ENCODE measurements at regions of chr6 and their contacts with region 1.

Region 1: DNA sequence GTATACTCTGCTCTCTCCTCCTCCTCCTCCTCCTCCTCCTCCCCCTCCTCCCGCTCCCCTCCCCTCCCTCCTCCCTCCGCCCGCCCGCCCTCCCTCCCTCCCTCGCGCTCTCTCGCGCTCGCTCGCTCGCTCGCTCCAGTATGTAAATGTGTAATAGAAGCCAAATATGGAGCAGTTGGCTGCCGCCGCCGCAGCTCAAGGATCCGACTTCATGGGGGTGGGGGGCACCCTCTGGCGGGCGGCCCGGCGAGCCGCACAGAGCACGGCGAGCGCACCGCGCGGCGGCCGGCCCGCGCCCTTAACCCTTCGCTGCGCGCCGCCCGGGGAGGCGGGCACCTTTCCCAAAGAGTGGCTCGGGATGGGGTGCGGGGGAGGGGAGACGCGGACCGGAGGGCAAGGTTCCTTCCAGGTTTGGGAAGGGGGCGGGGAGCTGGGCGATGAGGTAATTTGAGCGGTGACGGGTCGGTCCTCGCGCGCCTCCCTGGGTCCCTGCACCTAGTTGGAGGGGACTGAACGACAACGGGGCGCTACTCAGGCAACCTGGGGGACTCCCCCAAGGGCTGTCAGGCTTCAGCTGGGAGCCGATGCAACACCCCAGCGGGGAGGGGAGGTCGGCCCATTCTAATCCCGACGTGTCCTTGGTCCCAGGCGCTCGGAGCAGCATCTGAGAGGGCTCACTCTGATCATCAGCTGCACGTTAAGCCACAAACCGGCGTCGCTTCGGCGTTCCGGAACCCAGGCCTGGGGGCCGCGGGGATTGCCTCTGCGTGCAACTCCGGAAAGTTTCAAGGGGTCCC is 409 bp upstream of the ATXN1 start:
- DNase-seq: peak; percentile 91
- H3K4me3 Mint-ChIP-seq: peak overlapping the region; percentile 99
- H3K27ac Mint-ChIP-seq: peak overlapping the region; percentile 99
- H3K4me1 Mint-ChIP-seq: peaks cover 63% of the 10 kb centered on the region
- H3K27me3 Mint-ChIP-seq: no peaks in the 10 kb centered on the region

Region 2: GRCh38 chr6:16332175-16332542 is 429.5 kb before region 1 on chr6:
- CTCF ChIA-PET with region 1: interaction called, 40 read pairs
- DNase-seq: peak; percentile 83
- H3K4me3 Mint-ChIP-seq: no peak overlapping the region
- H3K27ac Mint-ChIP-seq: no peak overlapping the region
- H3K4me1 Mint-ChIP-seq: no peaks in the 10 kb centered on the region
- H3K27me3 Mint-ChIP-seq: no peaks in the 10 kb centered on the region

Region 3: DNA sequence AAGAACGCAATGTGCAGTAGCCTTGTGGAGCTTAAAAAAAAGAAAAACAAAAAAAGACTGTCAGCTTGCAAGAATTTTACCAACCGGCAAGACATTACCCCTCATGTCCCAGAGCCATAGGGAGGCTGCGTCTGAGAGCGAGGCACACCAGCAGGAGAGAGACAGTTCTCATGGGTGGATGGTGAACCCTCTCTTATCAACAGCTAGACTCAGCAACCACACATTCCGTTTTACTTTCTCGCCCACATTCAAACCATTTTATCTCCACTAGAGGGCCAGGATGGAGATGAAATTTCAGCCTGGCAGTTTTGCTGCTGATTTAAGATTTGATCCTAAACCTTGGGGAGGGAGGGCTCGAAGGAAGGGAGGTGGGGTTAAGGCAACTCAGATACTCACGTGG is 247.4 kb before region 1 on chr6:
- CTCF ChIA-PET with region 1: interaction called, 121 read pairs
- DNase-seq: peak; percentile 45
- H3K4me3 Mint-ChIP-seq: no peak overlapping the region
- H3K27ac Mint-ChIP-seq: peak overlapping the region; percentile 54
- H3K4me1 Mint-ChIP-seq: peaks cover 69% of the 10 kb centered on the region
- H3K27me3 Mint-ChIP-seq: no peaks in the 10 kb centered on the region

Region 4: DNA sequence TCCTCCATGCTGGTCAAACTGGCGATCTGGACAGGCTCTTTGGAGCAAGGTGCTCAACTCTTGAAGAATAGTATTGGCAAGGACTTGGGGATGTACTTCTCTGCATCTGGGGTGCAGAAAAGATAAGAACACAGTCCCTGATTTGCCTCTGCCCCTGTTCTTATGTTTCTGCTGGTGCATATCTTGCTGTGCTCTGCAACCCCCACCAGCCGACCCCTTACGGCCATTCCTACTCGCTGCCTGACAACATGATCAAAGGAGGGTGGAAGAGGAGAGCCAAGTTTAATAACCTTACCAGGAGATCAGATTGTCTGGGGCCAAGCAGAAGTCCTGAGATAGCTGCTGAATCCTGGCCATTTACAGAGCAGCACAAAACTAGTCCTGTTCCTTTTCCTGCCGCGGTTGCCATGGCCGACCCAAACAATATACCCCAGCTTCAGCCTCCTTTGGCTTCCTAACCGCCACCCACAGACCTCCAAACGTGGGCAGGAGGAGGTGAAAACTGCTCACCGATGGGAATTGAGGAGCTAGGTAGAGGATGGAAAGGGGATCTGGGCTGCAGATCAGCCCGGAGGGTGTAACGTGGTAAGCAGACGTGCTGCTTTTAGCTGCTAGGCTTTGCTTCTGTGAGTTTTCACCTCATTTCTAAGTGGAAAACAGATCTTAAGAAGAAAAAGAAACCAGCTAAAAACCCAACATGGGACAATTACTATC is 61.3 kb before region 1 on chr6:
- CTCF ChIA-PET with region 1: interaction called, 10 read pairs
- DNase-seq: peak; percentile 37
- H3K4me3 Mint-ChIP-seq: peak overlapping the region; percentile 14
- H3K27ac Mint-ChIP-seq: peak overlapping the region; percentile 71
- H3K4me1 Mint-ChIP-seq: peaks cover 59% of the 10 kb centered on the region
- H3K27me3 Mint-ChIP-seq: no peaks in the 10 kb centered on the region

Region 5: GRCh38 chr6:16802071-16802470 is 40.4 kb after region 1 on chr6:
- CTCF ChIA-PET with region 1: no interaction called
- DNase-seq: no peak
- H3K4me3 Mint-ChIP-seq: no peak overlapping the region
- H3K27ac Mint-ChIP-seq: no peak overlapping the region
- H3K4me1 Mint-ChIP-seq: no peaks in the 10 kb centered on the region
- H3K27me3 Mint-ChIP-seq: peaks cover 4% of the 10 kb centered on the region

Region 6: DNA sequence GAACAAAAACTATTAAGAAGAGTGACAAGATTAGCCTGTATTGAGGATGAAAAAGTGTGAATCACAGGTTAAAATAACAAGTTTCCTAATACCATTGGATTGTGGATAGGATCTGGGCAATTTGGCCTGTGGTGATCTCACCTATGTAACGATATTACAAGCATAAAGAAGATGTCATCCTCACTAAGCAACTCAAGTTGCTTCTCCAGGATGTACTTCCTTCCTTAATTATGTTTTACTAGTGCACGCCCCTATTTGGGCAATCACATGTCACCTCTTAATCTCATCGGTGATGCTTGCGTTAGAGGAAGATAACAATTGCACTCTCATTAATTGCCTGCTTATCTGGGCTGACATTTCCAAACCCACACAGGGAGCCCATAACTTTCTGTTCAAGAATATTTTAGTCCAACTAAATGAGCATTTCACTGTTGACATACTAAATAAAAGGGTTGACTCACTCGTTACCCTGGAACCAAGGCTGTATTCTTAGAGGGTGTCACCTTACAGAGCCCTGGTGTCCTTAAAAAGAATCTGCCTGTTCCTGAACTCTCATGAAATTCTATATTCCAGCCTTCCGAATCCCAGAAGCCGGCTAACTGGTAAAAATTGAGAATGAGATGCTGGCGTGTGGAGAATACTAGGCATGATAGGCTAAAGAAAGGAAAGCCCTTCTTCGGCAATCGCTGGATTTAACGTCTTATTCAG is 87.8 kb after region 1 on chr6:
- CTCF ChIA-PET with region 1: no interaction called
- DNase-seq: no peak
- H3K4me3 Mint-ChIP-seq: no peak overlapping the region
- H3K27ac Mint-ChIP-seq: no peak overlapping the region
- H3K4me1 Mint-ChIP-seq: peaks cover 30% of the 10 kb centered on the region
- H3K27me3 Mint-ChIP-seq: peaks cover 9% of the 10 kb centered on the region

Region 7: DNA sequence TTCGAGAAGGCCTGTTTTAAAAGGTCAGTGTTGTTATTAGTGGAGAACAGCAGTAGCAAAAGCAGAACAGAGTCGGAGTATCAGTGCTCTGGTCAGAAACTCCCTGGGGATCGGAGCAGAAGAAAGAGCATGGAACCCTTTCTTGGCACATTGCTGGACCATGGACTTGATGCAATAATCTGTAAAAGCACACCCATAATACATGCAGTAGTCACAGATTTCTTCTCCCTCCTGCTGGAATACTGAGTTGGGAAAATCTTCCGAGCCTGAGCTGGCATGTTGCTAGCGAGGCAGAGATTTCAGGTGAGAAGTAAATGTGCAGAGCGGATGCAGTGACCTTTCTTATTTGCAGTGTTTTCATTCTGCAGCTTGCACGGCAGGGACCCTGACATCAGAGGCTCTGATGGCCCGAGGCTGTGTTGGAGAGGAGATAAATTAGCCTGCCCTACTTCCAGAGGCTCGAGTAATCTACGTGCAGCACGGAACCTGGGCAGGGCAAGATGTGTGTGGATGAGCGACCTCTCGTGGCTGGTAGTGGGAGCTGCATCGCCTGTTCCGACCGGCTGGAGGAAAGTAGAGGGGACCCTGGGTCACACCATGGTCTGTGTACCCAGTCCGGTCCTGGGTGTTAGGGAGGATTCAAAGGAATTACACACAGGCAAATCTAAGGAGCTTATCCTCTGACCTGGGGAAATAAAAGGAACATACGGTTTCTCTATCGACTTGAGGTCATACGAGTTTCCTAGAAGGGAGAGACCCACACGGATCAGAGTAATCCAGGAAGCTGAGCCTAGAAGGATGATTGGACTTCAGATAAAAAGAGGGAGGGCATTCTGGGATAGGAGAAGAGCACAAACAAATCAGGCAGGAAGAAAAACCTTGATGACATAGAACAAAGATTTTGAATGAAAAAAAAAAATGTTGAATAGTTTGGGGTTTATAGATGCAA is 203.2 kb after region 1 on chr6:
- CTCF ChIA-PET with region 1: interaction called, 31 read pairs
- DNase-seq: peak; percentile 71
- H3K4me3 Mint-ChIP-seq: no peak overlapping the region
- H3K27ac Mint-ChIP-seq: no peak overlapping the region
- H3K4me1 Mint-ChIP-seq: peaks cover 3% of the 10 kb centered on the region
- H3K27me3 Mint-ChIP-seq: peaks cover 21% of the 10 kb centered on the region

Measured in activated naive CD4-positive, alpha-beta T cell treated with anti-CD3 and anti-CD28 coated beads, Interleukin-2, amount 10 ng/mL, durations not matched to agents 7 days and 5 days (primary cell).